Right ventricle myocardium inferior (tissue), 1 donor: ENCODE measurements at regions of chr10 and their contacts with region 1.

Region 1: DNA sequence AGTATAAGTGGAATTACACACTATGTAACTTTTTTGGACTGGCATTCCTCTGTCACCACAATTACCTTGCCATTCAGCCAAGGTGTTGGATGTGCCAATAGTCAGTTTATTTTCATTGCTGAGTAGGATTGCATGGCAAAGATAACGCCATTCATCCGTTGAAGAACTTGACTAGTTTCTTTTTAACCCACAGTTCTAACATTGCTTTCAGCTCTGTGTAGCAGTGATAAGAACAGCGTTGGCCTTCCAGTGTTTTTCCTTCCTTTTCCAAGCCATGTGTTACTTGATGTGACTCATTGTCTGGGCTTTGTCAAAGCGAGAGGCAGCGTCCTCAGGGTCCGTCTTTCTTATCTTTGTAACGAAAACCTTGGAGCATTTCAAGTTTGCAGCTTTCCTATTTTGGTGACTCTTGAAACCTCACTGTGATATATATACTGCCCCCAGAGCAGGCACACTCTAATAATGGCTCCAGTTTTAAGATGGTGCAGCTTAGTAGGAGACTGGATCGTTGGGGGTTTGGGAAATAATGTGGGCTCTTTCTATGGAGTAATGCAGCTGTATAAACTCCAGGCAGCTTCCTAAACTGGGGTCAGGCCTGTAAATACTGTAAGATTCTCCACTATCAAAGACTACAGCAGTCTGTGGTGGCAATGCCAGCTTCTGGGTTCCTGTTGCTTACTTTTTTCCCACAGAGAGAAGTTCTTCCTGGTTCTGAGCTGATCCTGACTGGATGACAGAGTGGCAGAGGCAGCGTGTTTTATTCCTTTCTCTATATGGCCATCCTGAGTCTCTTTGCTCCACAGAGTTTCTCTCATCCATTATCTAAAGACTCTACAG is 41.7 kb downstream of the AKR1E2 start:
- DNase-seq: no peak
- ATAC-seq: peak; percentile 98

Region 2: GRCh38 chr10:4947635-4948596 is 80.2 kb after region 1 on chr10:
- intact Hi-C with region 1: loop called (anchors 5 kb)
- DNase-seq: no peak
- ATAC-seq: peak; percentile 93